Posterior vena cava (tissue), 2 donors: ENCODE measurements at regions of chr2 and their contacts with region 1.

Region 1: DNA sequence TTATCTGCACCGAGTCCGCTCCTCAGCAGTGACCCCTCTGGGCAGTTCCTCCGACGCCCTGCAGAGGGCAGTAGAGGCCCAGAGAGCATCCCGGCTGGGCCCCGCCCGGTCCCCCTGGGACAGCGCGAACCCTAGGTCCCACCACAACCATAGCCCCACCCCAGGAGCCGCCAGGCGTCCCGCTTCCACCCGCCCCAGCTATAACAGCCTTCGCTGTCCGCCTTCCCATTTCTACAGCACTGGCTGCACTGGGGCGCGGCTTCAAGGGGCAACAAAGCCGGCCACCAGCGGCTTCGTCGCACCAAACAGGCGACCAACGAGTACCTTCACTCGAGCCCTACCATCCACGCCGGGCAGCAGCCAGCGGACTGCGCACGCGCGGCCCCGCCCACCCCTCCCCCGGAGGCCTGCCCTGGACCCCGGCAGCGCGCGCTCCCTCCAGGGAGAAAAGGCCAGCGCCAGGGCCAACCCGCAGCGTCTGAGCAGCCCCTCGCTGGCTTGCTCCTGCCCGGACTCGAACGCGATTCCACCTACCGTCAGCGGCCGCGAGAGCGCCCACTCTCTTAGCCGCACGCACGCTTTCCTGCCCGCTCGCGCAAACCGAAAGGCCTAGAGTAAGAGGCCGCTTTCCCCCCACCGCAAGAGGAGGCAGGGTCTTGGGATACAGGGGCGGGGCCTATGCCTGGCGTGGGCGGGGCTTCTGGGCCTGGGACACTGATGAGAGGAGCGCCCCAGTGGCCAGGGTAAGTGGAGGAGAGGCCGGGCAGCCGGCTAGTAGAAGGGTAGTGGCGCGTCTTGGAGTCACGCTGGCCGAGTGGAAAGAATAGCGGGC is at the start of gene NHEJ1:
- DNase-seq: peak; percentile 99
- total RNA-seq, gene NHEJ1: 8.9 to 11.6 TPM

Region 2: GRCh38 chr2:219057709-219058540 is 102.5 kb before region 1 on chr2:
- intact Hi-C with region 1: loop called in 1 of 2 experiments (anchors 1 kb)
- DNase-seq: peak; percentile 93

Region 3: GRCh38 chr2:219294356-219295351 is 134.3 kb after region 1 on chr2:
- intact Hi-C with region 1: loop called (anchors 5 kb)
- DNase-seq: peak; percentile 96

Region 4: DNA sequence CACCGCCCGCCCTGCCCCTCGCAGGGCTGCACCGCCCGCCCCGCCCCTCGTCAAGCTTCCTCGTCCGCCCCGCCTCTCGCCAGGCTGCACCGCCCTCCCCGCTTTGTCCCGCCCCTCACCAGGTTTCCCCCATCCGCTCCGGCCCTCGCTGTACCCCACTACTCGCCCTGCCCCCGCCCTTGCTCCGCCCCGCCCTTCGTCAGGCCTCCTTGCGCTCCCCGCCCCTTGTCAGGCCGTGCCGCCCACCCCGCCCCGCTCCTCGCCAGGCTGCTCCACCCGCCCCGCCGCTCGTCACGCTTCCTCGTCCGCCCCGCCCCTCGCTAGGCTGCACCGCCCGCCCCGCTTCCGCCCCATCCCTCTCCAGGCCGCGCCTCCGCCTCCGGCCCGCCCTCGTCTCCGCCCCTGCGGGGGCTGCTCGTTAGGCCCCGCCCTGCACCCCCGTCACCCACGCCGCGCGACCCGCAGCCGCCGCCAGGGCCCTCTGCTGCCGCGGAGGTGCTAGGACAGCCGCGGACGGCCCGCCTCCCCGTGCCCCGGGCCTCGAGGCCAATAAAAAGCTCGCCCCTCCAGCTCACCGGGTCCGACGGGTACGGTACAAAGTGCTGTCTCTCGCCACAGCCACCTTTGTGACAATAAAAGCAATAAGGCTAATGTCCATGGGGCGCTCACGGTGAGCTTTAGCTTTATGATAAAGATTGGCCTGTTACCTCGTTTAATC is 227.9 kb after region 1 on chr2:
- intact Hi-C with region 1: loop called in 1 of 2 experiments (anchors 10 kb)
- DNase-seq: peak; percentile 100